H1 (cell line): ENCODE measurements at regions of chr5 and their contacts with region 1.

Region 1: DNA sequence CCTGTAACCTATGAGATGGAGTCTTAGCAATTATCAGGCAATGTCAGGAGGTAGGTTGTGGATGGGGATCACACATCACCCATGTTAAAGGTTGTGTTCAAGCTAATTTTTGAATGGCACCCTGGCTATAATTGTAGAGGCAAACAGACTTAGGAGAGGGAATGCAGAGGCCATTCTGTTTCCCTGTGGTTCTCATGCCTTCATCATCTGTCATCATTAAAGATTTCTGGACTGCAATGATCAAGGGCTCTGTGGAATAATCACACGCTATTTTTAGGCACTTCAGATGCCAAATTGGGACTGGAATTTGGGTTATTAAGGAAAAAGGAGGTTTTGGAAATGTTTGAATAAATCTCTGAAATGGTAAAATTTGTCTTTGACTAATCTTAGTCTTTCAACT is 1065.4 kb downstream of the TAF11L14 start:
- DNase-seq: no peak
- H3K4me3 ChIP-seq: no peak overlapping the region
- H3K27ac ChIP-seq: no peak overlapping the region
- H3K4me1 ChIP-seq: no peaks in the 10 kb centered on the region
- H3K27me3 ChIP-seq: no peaks in the 10 kb centered on the region
- CTCF ChIP-seq: no peak
- EP300 ChIP-seq: no peak
- POLR2A ChIP-seq: no peak
- RAD21 ChIP-seq: no peak

Region 2: DNA sequence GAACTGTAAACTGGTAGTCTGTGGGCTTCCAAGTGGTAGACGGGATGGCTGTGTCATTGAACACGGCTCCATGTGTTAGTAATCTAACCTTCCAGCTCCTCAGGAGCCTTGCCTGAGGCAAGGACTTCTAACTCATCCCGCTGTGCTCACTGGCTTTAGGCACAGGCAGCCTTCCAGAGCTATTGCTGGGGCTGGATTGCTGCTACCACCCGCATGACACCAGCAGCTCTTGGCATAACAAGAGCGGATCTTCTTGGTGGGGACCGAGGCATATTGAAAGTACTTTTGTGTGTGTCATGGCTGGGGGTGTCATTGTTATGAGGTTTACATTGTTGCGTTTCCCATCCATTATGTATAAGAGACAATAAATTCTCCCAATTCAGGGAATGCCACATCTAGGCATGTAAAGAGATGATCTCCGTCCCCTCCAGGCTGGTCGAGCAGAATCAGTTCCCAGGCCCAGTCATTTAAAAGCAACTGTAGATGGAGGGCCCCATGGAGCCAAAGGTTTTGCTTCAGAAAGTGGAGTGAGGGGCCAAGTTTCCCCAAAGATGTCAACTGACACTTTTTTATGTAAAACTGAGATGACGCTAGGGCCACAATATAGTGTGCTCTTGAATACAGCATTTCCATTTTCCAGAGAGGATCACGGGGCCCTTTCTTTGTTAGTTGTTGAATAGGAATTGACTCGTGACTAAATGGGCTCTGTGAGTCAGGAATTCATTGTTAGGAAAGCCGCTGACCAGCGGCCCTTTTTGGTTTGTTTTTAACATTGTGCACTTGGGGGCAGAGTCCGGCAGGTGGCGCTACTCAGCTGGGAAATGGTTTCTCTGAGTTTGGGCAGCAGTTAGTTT is 305.9 kb before region 1 on chr5:
- CTCF ChIA-PET with region 1: interaction called, 14 read pairs
- POLR2A ChIA-PET with region 1: no interaction called
- DNase-seq: peak; percentile 71 to 93
- H3K4me3 ChIP-seq: no peak overlapping the region
- H3K27ac ChIP-seq: no peak overlapping the region
- H3K4me1 ChIP-seq: peaks cover 0 to 6% (median 5%) of the 10 kb centered on the region in 4 experiments; a peak in 4 of 7 replicates
- H3K27me3 ChIP-seq: no peaks in the 10 kb centered on the region
- CTCF ChIP-seq: peak; percentile 78 to 85 (median 84)
- EP300 ChIP-seq: no peak
- POLR2A ChIP-seq: no peak
- RAD21 ChIP-seq: peak; percentile 94 to 95

Region 3: GRCh38 chr5:18465833-18466591 is 233.7 kb before region 1 on chr5:
- CTCF ChIA-PET with region 1: interaction called, 59 read pairs
- POLR2A ChIA-PET with region 1: interaction called, 3 read pairs
- DNase-seq: peak; percentile 31 to 90
- H3K4me3 ChIP-seq: no peak overlapping the region
- H3K27ac ChIP-seq: no peak overlapping the region
- H3K4me1 ChIP-seq: no peaks in the 10 kb centered on the region
- H3K27me3 ChIP-seq: no peaks in the 10 kb centered on the region
- CTCF ChIP-seq: peak in 2 of 3 experiments; percentile 82 to 83; a peak in 3 of 4 replicates
- EP300 ChIP-seq: no peak
- POLR2A ChIP-seq: no peak
- RAD21 ChIP-seq: peak; percentile 96

Region 4: GRCh38 chr5:18712936-18713485 is 13.3 kb after region 1 on chr5:
- CTCF ChIA-PET with region 1: interaction called, 10 read pairs
- POLR2A ChIA-PET with region 1: no interaction called
- DNase-seq: no peak
- H3K4me3 ChIP-seq: no peak overlapping the region
- H3K27ac ChIP-seq: no peak overlapping the region
- H3K4me1 ChIP-seq: no peaks in the 10 kb centered on the region
- H3K27me3 ChIP-seq: no peaks in the 10 kb centered on the region
- CTCF ChIP-seq: no peak
- EP300 ChIP-seq: no peak
- POLR2A ChIP-seq: no peak
- RAD21 ChIP-seq: no peak

Region 5: DNA sequence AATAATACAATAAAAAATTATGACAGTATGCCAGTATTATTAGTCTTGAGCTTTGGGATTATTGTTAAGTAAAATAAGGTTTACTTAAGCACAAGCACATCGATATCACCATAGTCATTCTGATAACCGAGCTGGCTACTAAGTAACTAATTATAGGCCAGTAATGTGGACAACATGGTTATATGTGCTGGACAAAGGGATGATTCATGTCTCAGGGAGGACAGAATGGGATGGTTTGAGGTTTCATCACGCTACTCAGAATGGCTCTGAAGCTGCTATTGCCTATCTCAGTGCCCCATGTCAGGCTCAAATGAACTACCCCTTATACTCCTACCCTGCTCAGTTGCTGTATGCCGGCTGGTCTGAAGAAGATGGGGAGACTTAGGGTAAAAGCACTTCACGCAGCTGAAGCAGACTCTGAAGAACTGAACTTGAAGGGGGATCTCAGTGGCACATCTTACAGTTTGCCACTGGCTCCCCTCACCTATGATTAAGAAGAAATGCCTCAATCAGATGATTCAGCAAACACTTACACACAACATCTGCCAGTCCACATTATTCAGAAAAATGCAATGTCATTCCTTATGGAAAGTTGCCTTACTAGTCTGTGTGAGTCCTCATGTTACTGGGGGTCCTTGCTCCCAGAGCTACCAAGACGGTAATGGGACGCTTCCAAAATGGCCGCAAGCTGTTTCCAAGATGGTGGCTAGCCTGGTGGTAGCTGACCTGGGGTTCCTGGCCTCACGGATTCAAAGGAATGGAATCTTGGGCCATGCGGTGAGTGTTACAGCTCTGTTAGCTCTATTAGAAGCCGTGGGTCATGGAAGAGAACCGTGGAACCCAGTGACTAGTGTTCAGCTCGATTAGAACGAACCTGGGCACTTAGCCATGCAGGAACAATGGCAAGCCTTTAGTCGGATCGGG is 33.1 kb after region 1 on chr5:
- CTCF ChIA-PET with region 1: interaction called, 10 read pairs
- POLR2A ChIA-PET with region 1: interaction called, 3 read pairs
- DNase-seq: no peak
- H3K4me3 ChIP-seq: no peak overlapping the region
- H3K27ac ChIP-seq: no peak overlapping the region
- H3K4me1 ChIP-seq: peaks cover 0 to 27% (median 7%) of the 10 kb centered on the region in 4 experiments; a peak in 6 of 7 replicates
- H3K27me3 ChIP-seq: no peaks in the 10 kb centered on the region
- CTCF ChIP-seq: no peak
- EP300 ChIP-seq: no peak
- POLR2A ChIP-seq: no peak
- RAD21 ChIP-seq: no peak